Common myeloid progenitor, CD34-positive (primary cell): ENCODE measurements at regions of chr7 and their contacts with region 1.

Region 1: GRCh38 chr7:43582503-43583423 is at the start of gene STK17A:
- DNase-seq: peak; percentile 93 to 95 (median 95)
- H3K4me3 ChIP-seq: peak within 1 kb of the TSS; percentile 63 to 97 (median 91)
- H3K27ac ChIP-seq: peak within 1 kb of the TSS; percentile 81 to 87
- H3K4me1 ChIP-seq: peaks cover 7 to 19% (median 14%) of the 10 kb centered on the region in 4 experiments
- H3K27me3 ChIP-seq: peaks cover 3 to 14% (median 7%) of the 10 kb centered on the region in 5 experiments

Region 2: DNA sequence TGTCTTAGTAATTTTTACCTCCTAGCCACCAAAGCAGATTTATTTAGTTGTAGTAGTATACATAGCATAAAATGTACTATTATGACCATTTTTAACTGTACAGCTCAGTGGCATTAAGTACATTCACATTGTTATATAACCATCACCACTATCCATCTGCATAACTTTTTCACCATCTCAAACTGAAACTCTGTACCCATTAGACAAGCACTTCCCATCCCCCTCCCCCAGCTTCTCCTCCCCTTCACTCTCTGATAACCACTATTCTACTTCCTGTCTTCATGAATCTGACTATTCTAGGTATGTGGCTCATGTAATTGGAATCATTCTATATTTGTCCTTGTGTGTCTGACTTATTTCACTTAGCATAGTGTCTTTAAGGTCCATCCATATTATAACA is 578.7 kb before region 1 on chr7:
- CTCF ChIA-PET with region 1: no interaction called
- POLR2A ChIA-PET with region 1: no interaction called
- DNase-seq: no peak
- H3K4me3 ChIP-seq: no peak overlapping the region
- H3K27ac ChIP-seq: no peak overlapping the region
- H3K4me1 ChIP-seq: no peaks in the 10 kb centered on the region
- H3K27me3 ChIP-seq: peaks cover 0 to 5% (median 0%) of the 10 kb centered on the region in 5 experiments

Region 3: DNA sequence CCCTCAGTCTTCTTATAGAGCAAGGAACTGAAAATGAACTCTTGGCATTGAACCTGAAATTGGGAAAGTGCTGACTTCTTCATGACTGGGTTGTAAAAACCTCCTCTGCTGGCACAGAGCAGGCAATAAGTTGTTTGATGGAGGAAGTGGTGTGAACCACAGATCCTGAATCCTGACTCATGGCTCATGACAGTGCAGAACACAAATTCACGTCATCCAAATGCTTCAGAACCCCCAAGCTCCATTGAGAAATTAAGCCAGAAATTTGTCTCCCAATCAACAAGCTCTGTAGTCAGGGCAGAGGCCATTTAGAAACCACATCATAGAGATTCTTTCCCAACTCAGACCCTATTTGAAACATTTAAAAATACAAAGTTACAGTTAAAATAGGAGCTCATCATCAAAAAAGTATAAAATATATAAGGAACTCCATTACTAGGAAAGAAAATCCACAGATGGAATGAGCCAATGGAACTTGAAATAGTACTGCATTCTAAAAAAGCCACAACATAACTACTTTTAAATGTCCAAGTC is 10.2 kb before region 1 on chr7:
- CTCF ChIA-PET with region 1: interaction called, 27 read pairs
- POLR2A ChIA-PET with region 1: interaction called, 7 read pairs
- DNase-seq: peak; percentile 98 to 99 (median 99)
- H3K4me3 ChIP-seq: peak overlapping the region in 1 of 7 experiments; percentile 28
- H3K27ac ChIP-seq: peak overlapping the region in 1 of 2 experiments; percentile 61
- H3K4me1 ChIP-seq: peaks cover 0 to 17% (median 10%) of the 10 kb centered on the region in 4 experiments
- H3K27me3 ChIP-seq: no peaks in the 10 kb centered on the region

Region 4: DNA sequence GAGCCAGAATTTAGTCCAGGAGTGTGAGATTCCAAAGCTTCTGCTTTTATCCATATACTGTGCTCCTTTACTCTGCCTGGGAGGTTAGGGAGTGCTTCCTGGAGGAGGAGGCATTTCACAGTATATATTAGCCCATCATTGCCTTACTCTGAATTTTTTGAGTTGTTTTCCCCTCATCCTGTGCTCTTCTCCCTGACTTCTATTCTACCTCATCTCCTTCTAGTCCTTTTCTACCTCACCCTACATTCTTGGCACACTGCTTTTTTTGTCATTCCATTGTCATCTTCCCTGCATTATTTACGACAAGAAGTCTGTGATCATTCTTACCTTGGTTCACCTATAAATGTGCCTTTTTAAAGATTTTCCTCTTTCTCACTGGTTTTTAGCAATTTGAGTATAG is 21.5 kb after region 1 on chr7:
- CTCF ChIA-PET with region 1: interaction called, 11 read pairs
- POLR2A ChIA-PET with region 1: no interaction called
- DNase-seq: no peak
- H3K4me3 ChIP-seq: no peak overlapping the region
- H3K27ac ChIP-seq: no peak overlapping the region
- H3K4me1 ChIP-seq: no peaks in the 10 kb centered on the region
- H3K27me3 ChIP-seq: no peaks in the 10 kb centered on the region

Region 5: GRCh38 chr7:43647673-43648472 is 65.1 kb after region 1 on chr7:
- CTCF ChIA-PET with region 1: interaction called, 26 read pairs
- POLR2A ChIA-PET with region 1: interaction called, 21 read pairs
- DNase-seq: peak; percentile 72 to 88 (median 87)
- H3K4me3 ChIP-seq: peak overlapping the region in 4 of 7 experiments; percentile 20 to 48 (median 39)
- H3K27ac ChIP-seq: peak overlapping the region; percentile 40 to 62
- H3K4me1 ChIP-seq: peaks cover 40 to 61% (median 54%) of the 10 kb centered on the region in 4 experiments
- H3K27me3 ChIP-seq: no peaks in the 10 kb centered on the region

Region 6: DNA sequence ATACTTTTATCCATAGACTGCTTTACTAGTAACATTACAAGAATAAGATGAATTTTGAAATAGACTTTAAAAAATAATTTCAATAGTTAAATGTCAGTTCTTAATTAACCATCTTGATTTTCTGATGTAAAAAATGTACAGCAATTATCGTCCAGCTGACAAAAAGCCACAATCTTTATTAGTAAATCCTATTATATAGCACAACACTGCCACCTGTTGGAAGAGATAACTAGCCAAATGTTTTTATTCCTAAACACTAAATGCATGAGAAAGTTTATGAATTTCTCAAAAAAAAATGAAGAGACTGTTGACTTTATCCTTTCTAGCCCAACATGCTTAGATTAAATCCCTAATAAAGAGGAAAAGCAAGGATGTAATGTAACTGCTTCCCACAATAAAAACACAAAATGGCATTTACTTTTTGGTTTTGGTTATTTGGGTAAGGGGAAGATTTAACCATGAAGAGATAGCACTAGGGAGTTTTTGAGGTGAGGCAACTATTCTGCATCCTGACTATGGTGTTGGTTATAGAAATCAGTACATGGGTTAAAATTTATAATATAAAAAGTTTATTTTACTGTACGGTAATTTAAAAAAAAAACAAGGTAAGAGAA is 138.5 kb after region 1 on chr7:
- CTCF ChIA-PET with region 1: interaction called, 31 read pairs
- POLR2A ChIA-PET with region 1: no interaction called
- DNase-seq: peak; percentile 56 to 78 (median 75)
- H3K4me3 ChIP-seq: no peak overlapping the region
- H3K27ac ChIP-seq: no peak overlapping the region
- H3K4me1 ChIP-seq: no peaks in the 10 kb centered on the region
- H3K27me3 ChIP-seq: no peaks in the 10 kb centered on the region

Region 7: DNA sequence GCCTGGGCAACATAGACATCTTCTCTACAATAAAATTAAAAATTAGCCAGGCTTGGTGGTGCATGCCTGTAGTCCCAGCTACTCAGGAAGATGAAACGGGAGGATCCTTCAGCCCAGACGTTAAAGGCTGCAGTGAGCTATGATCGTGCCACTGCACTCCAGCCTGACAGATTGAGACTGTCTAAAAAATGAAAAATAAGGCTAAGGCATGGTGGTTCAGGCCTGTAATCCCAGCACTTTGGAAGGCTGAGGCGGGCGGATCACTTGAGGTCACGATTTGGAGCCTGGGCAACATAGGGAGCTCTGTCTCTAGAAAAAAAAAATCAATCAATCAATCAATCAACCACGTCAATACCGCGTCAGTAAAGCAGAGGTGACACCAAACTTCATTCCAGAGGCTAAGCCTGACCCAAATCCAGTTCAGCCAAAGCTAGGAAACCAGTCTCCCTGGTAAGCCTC is 255.5 kb after region 1 on chr7:
- CTCF ChIA-PET with region 1: interaction called, 11 read pairs
- POLR2A ChIA-PET with region 1: no interaction called
- DNase-seq: no peak
- H3K4me3 ChIP-seq: peak overlapping the region in 3 of 7 experiments; percentile 38 to 70 (median 65)
- H3K27ac ChIP-seq: no peak overlapping the region
- H3K4me1 ChIP-seq: peaks cover 0 to 7% (median 2%) of the 10 kb centered on the region in 4 experiments
- H3K27me3 ChIP-seq: peaks cover 0 to 2% (median 0%) of the 10 kb centered on the region in 5 experiments